ENCODE measurements at regions of chr14 and their contacts with region 1.

Region 1: DNA sequence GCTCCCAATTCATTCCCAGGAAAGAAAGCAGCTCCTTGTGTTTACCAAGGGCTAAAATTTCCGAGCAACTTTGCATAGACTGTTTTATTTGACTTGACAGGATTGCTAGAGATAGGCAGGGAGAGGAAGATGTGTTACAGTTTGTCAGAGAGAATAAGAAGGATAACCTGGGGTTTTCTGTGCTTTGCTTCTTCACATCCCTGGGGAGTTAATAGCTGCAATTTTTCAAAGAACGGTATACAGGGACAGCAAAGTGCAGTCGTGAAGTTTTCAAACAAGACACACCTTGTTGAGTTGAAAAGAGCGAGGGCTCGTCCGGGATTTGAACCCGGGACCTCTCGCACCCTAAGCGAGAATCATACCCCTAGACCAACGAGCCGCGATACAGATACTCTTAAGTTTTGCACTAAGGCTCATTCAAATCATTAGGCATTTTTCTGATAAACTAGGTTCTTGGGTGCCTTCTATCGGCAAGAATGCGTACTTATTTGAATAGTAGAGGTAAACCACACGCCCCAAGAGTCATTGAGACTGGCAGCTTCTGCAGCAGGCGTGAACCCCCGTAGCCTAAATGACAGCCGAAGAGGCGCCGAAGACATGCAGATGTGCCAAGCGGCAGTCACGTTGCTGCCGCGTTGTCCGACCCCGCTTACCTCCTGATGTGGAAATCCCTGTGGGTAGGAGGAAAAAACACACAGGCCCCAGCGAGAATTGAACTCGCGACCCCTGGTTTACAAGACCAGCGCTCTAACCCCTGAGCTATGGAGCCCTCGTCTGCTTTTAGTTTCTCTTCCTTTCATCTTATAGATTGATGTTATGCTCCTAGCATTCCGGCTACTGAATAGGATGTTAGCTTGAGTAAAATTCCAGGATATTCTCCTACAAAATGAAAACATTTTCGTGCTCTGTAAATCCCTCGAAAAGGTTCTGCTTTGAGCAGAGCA is 22.2 kb upstream of the RNASE12 start:
- DNase-seq: peak; percentile 66 to 93 (median 92)
- H3K4me3 ChIP-seq: peak overlapping the region; percentile 78
- H3K4me3 Mint-ChIP-seq: no peak overlapping the region
- H3K27ac ChIP-seq: no peak overlapping the region
- H3K27ac Mint-ChIP-seq: no peak overlapping the region
- H3K4me1 ChIP-seq: peaks cover 34% of the 10 kb centered on the region
- H3K4me1 Mint-ChIP-seq: peaks cover 0 to 18% (median 12%) of the 10 kb centered on the region in 3 donors
- H3K27me3 ChIP-seq: no peaks in the 10 kb centered on the region
- H3K27me3 Mint-ChIP-seq: peaks cover 0 to 3% of the 10 kb centered on the region in 2 donors

Region 2: DNA sequence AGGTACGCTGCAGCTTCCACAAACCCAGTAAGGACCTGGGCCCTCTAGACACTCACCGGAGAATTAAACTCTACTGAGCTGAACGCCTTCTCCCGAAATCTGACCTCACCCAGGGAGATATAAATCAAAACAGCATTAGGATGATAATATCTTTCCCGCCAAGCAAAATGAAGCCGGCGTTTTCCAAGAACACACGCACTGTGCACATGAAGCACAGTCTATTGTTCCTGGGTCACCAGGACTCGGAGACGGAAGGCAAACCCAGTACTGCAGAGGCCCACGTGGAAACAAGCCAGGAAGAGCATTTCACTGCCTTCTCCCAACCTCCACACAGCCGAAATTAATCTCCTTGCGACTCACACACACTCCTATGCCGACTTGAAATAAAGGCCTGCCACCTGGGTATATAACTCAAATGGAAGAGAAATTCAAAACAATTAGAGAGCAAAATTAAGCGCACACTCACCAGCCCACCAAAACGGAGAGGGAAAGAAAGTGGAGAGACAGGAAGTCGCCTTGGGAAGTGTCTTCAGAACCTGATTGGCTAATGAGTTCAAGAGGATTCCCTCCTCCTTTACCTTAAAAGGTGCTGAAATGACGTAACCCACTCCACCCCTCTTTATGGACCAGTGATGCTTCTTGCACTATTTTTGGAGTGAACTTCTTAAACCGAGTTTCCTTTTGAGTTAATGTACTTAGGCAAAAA is 280.4 kb before region 1 on chr14 and contains the start of gene CCNB1IP1:
- CTCF ChIA-PET with region 1: interaction called, 144 read pairs
- POLR2A ChIA-PET with region 1: no interaction called
- DNase-seq: peak; percentile 10 to 78 (median 69)
- H3K4me3 ChIP-seq: peak within 1 kb of the TSS; percentile 88
- H3K4me3 Mint-ChIP-seq: peak within 1 kb of the TSS; percentile 99 to 100 (median 99)
- H3K27ac ChIP-seq: peak within 1 kb of the TSS; percentile 76
- H3K27ac Mint-ChIP-seq: peak within 1 kb of the TSS; percentile 83 to 98 (median 96)
- H3K4me1 ChIP-seq: peaks cover 16% of the 10 kb centered on the region
- H3K4me1 Mint-ChIP-seq: peaks cover 27 to 45% (median 31%) of the 10 kb centered on the region in 3 donors
- H3K27me3 ChIP-seq: no peaks in the 10 kb centered on the region
- H3K27me3 Mint-ChIP-seq: no peaks in the 10 kb centered on the region
- total RNA-seq, gene CCNB1IP1: 43.6 to 50.5 TPM

Region 3: DNA sequence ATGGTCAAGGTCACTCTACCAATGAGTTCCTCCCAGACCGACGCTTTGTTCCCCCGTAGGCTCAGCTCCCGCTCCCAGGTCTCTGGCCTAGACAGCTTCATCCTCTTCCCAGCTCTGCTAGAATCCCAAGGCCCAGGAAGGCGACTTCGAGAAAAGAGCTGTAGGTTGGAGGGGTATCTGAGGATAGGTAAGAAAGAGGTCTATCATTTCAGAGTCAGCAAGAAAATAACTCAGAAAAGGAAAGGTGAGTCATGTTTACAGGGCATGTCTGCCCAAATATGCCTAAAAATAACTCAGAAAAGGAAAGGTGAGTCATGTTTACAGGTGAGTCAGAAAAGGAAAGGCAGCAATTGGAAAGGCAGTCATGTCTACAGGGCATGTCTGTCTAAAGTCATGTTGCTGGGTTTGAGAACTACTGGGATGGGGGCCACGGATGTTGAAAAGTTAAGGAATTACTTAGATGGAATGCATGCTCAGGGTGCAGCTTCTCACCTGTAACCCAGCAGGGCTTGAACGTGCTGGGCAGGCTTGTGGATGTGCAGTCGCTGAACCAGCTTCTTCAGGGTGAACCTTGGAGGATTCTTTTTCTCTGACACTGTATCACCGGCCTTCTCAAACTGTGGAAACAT is 212.3 kb before region 1 on chr14:
- CTCF ChIA-PET with region 1: interaction called, 3 read pairs
- POLR2A ChIA-PET with region 1: interaction called, 12 read pairs
- DNase-seq: no peak
- H3K4me3 ChIP-seq: no peak overlapping the region
- H3K4me3 Mint-ChIP-seq: no peak overlapping the region
- H3K27ac ChIP-seq: no peak overlapping the region
- H3K27ac Mint-ChIP-seq: peak overlapping the region in 6 of 8 donors; percentile 3 to 56 (median 32)
- H3K4me1 ChIP-seq: no peaks in the 10 kb centered on the region
- H3K4me1 Mint-ChIP-seq: peaks cover 20 to 26% (median 25%) of the 10 kb centered on the region in 3 donors
- H3K27me3 ChIP-seq: no peaks in the 10 kb centered on the region
- H3K27me3 Mint-ChIP-seq: no peaks in the 10 kb centered on the region

Region 4: DNA sequence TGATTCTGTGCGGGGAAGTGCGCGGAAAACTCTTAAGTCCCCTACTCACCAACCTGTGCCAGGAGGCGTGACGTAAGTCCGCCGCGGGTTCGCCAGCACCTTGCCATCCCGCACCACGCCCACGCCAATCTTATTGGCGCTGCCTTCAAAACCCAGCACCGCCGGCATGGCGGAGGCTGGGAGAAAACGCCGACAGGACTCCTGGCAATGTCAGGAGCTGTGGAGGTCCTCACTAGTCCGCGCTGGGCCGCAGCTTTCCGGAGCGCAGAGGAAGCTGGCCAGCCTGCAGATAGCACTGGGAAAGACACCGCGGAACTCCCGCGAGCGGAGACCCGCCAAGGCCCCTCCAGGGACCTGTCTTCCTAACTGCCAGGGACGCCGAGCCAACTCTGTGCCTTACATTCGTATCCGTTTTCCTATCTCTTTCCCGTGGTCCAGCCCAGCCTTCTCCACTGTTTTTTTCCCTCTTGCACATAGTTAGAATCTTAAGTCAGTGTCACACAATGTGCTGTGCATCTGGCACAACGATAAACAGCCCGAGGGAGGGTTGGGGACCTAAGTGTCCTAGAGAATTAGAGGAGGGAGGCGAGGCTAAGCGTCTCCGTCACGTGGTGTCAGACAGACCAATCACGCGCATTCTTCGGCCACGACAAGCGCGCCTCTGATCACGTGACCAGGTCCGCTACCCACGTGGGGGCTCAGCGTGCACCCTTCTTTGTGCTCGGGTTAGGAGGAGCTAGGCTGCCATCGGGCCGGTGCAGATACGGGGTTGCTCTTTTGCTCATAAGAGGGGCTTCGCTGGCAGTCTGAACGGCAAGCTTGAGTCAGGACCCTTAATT is 158.6 kb before region 1 on chr14 and contains the starts of genes APEX1 and OSGEP:
- CTCF ChIA-PET with region 1: interaction called, 13 read pairs
- POLR2A ChIA-PET with region 1: interaction called, 3 read pairs
- DNase-seq: peak; percentile 96 to 99 (median 97)
- H3K4me3 ChIP-seq: peak within 1 kb of the TSS; percentile 78
- H3K4me3 Mint-ChIP-seq: peak within 1 kb of the TSS in 1 of 7 donors; percentile 44
- H3K27ac ChIP-seq: peak within 1 kb of the TSS; percentile 87
- H3K27ac Mint-ChIP-seq: no peak within 1 kb of the TSS
- H3K4me1 ChIP-seq: peaks cover 25% of the 10 kb centered on the region
- H3K4me1 Mint-ChIP-seq: peaks cover 20 to 36% (median 30%) of the 10 kb centered on the region in 3 donors
- H3K27me3 ChIP-seq: no peaks in the 10 kb centered on the region
- H3K27me3 Mint-ChIP-seq: no peaks in the 10 kb centered on the region
- total RNA-seq, gene APEX1: 242 to 248 TPM
- total RNA-seq, gene OSGEP: 58.0 to 58.1 TPM

Region 5: GRCh38 chr14:20632682-20633428 is 19.5 kb after region 1 on chr14:
- CTCF ChIA-PET with region 1: interaction called, 21 read pairs
- POLR2A ChIA-PET with region 1: interaction called, 8 read pairs
- DNase-seq: peak in 4 of 5 donors; percentile 47 to 71 (median 68)
- H3K4me3 ChIP-seq: peak overlapping the region; percentile 69
- H3K4me3 Mint-ChIP-seq: peak overlapping the region; percentile 86 to 94 (median 89)
- H3K27ac ChIP-seq: no peak overlapping the region
- H3K27ac Mint-ChIP-seq: peak overlapping the region in 7 of 8 donors; percentile 22 to 94 (median 85)
- H3K4me1 ChIP-seq: peaks cover 23% of the 10 kb centered on the region
- H3K4me1 Mint-ChIP-seq: peaks cover 43 to 63% (median 59%) of the 10 kb centered on the region in 3 donors
- H3K27me3 ChIP-seq: no peaks in the 10 kb centered on the region
- H3K27me3 Mint-ChIP-seq: peaks cover 23 to 32% of the 10 kb centered on the region in 2 donors

Region 6: GRCh38 chr14:20644520-20644919 is 31.2 kb after region 1 on chr14:
- CTCF ChIA-PET with region 1: no interaction called
- POLR2A ChIA-PET with region 1: no interaction called
- DNase-seq: no peak
- H3K4me3 ChIP-seq: no peak overlapping the region
- H3K4me3 Mint-ChIP-seq: no peak overlapping the region
- H3K27ac ChIP-seq: no peak overlapping the region
- H3K27ac Mint-ChIP-seq: no peak overlapping the region
- H3K4me1 ChIP-seq: no peaks in the 10 kb centered on the region
- H3K4me1 Mint-ChIP-seq: no peaks in the 10 kb centered on the region
- H3K27me3 ChIP-seq: peaks cover 15% of the 10 kb centered on the region
- H3K27me3 Mint-ChIP-seq: peaks cover 7 to 46% of the 10 kb centered on the region in 2 donors

Region 7: DNA sequence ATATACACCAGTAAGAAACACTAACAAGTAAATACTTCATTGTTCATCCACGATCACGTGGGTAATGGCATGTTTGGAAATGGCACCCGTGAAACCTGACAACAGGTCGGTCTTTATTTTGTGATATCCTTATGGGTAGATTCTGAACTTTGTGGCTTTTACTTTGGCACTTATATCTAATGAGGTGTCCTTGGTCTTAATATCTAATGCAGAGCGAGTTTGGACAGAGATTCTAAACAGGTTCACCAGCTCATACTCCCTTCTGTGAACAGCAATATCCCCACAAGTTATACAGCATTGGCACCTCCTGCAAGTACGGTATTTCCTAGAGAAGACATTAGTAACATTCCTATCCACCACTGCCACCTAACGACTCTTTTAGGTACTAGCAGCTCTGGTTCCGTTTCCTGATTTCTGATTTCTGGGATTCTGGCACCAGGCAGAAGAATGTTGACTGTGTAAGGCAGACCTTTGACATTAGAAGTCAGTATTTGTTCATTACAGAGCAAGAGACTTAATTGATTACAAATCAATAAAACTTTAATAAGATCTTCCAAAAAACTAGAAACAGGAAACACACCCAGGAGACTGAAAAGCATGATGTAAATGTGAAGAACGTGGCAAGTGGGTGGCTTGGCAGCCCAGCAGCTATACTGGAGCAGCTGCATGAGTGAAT is 77.6 kb after region 1 on chr14:
- CTCF ChIA-PET with region 1: interaction called, 16 read pairs
- POLR2A ChIA-PET with region 1: interaction called, 3 read pairs
- DNase-seq: peak in 4 of 5 donors; percentile 18 to 65 (median 54)
- H3K4me3 ChIP-seq: no peak overlapping the region
- H3K4me3 Mint-ChIP-seq: peak overlapping the region in 1 of 7 donors; percentile 7
- H3K27ac ChIP-seq: no peak overlapping the region
- H3K27ac Mint-ChIP-seq: peak overlapping the region in 1 of 8 donors; percentile 12
- H3K4me1 ChIP-seq: no peaks in the 10 kb centered on the region
- H3K4me1 Mint-ChIP-seq: peaks cover 4 to 6% (median 5%) of the 10 kb centered on the region in 3 donors
- H3K27me3 ChIP-seq: no peaks in the 10 kb centered on the region
- H3K27me3 Mint-ChIP-seq: peaks cover 7 to 8% of the 10 kb centered on the region in 2 donors